Naive thymus-derived CD4-positive, alpha-beta T cell (primary cell): ENCODE measurements at regions of chr6 and their contacts with region 1.

Region 1: GRCh38 chr6:52577022-52577777 is at the start of gene TRAM2:
- DNase-seq: peak; percentile 67 to 86 (median 79)
- ATAC-seq: peak; percentile 90
- H3K4me3 ChIP-seq: peak within 1 kb of the TSS; percentile 76
- H3K4me3 Mint-ChIP-seq: peak within 1 kb of the TSS; percentile 83 to 95 (median 88)
- H3K27ac ChIP-seq: peak within 1 kb of the TSS; percentile 80
- H3K27ac Mint-ChIP-seq: peak within 1 kb of the TSS; percentile 72 to 93 (median 89)
- H3K4me1 ChIP-seq: peaks cover 27 to 34% of the 10 kb centered on the region in 2 donors
- H3K4me1 Mint-ChIP-seq: peaks cover 35 to 60% (median 49%) of the 10 kb centered on the region in 7 donors
- H3K27me3 ChIP-seq: no peaks in the 10 kb centered on the region
- H3K27me3 Mint-ChIP-seq: peaks cover 0 to 20% (median 0%) of the 10 kb centered on the region in 5 donors
- total RNA-seq, gene TRAM2: 8.9 to 10.9 (median 10.3) TPM

Region 2: GRCh38 chr6:50742161-50742560 is 1835.0 kb before region 1 on chr6:
- CTCF ChIA-PET with region 1: no interaction called
- POLR2A ChIA-PET with region 1: no interaction called
- intact Hi-C with region 1: no loop called
- DNase-seq: no peak
- ATAC-seq: no peak
- H3K4me3 ChIP-seq: no peak overlapping the region
- H3K4me3 Mint-ChIP-seq: no peak overlapping the region
- H3K27ac ChIP-seq: no peak overlapping the region
- H3K27ac Mint-ChIP-seq: no peak overlapping the region
- H3K4me1 ChIP-seq: no peaks in the 10 kb centered on the region
- H3K4me1 Mint-ChIP-seq: no peaks in the 10 kb centered on the region
- H3K27me3 ChIP-seq: no peaks in the 10 kb centered on the region
- H3K27me3 Mint-ChIP-seq: no peaks in the 10 kb centered on the region

Region 3: DNA sequence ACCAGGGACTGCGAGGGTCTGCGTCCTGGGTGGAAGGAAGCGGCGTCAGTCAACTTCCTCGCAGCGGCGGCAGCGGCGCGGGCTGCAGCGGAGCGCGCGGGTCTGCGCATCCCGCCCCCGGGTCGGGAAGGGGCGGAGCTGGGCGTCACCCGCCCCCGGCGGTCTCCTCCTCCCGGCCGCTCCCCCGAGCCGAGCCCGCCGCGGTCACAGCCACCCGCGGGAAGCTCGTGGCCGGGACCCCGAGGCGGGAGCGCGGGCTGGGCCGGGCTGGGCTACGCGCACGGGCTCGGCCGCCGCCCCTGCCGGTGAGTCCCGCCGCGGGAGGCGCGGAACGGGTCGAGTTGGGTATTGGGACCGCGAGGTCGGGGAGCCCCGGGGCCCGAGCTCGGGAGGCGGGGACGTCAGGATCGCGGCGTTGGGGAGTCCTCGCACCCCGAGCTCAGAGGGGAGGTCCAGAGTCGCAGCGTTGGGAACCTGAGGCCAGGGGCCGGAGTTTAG is 215.2 kb before region 1 on chr6 and contains the start of gene PAQR8:
- CTCF ChIA-PET with region 1: interaction called, 7 read pairs
- POLR2A ChIA-PET with region 1: no interaction called
- intact Hi-C with region 1: loop called (anchors 1 kb)
- DNase-seq: peak; percentile 77 to 89 (median 86)
- ATAC-seq: peak; percentile 95
- H3K4me3 ChIP-seq: peak within 1 kb of the TSS; percentile 90
- H3K4me3 Mint-ChIP-seq: peak within 1 kb of the TSS; percentile 83 to 100 (median 98)
- H3K27ac ChIP-seq: peak within 1 kb of the TSS; percentile 86
- H3K27ac Mint-ChIP-seq: peak within 1 kb of the TSS; percentile 90 to 99 (median 94)
- H3K4me1 ChIP-seq: peaks cover 25 to 28% of the 10 kb centered on the region in 2 donors
- H3K4me1 Mint-ChIP-seq: peaks cover 25 to 55% (median 45%) of the 10 kb centered on the region in 7 donors
- H3K27me3 ChIP-seq: no peaks in the 10 kb centered on the region
- H3K27me3 Mint-ChIP-seq: peaks cover 0 to 9% (median 0%) of the 10 kb centered on the region in 5 donors
- total RNA-seq, gene PAQR8: 7.5 to 46.2 (median 21.6) TPM

Region 4: DNA sequence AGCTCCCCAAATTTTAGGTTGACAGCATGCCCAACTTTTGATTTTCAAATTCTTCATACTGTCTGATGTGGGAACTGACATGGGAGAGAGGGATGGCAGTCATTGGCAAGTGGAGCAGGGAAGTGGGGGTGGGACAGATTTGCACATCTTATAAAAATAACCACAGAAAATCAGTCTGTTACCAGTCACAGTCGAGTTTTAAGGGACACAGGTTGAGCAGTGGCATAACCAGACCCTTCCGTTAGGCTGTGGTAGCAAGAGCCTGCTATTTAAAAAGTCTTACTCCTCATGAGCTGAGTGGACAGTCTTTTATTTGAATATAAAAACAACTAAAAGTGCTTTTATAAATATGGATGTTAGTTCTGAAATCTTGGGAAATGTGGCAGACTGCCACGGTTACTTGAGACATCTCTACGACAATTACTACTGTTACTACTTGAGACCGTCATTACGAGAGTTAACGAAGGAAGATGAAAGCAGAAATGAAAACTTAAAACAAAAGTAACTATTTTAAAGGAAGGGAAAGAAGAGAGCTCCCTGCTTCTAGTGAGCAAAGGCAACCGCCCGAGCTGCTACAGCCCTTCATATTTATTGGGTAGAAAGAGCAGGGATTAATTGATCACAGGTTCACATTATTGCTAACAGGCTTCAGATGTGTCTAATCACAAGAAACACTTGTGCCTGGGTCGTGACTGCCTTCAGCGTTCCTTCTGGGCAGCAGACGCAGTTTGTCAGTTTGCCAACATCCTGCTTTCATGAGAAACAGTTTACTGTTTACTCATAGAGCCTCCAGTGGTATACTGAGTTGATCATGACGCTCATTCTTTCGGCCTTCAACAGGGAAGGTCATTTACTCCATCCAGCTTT is 85.8 kb before region 1 on chr6:
- CTCF ChIA-PET with region 1: no interaction called
- POLR2A ChIA-PET with region 1: no interaction called
- intact Hi-C with region 1: loop called in 1 of 2 experiments (anchors 5 kb)
- DNase-seq: no peak
- ATAC-seq: no peak
- H3K4me3 ChIP-seq: no peak overlapping the region
- H3K4me3 Mint-ChIP-seq: no peak overlapping the region
- H3K27ac ChIP-seq: no peak overlapping the region
- H3K27ac Mint-ChIP-seq: no peak overlapping the region
- H3K4me1 ChIP-seq: no peaks in the 10 kb centered on the region
- H3K4me1 Mint-ChIP-seq: peaks cover 0 to 37% (median 0%) of the 10 kb centered on the region in 7 donors
- H3K27me3 ChIP-seq: no peaks in the 10 kb centered on the region
- H3K27me3 Mint-ChIP-seq: peaks cover 0 to 10% (median 0%) of the 10 kb centered on the region in 5 donors

Region 5: DNA sequence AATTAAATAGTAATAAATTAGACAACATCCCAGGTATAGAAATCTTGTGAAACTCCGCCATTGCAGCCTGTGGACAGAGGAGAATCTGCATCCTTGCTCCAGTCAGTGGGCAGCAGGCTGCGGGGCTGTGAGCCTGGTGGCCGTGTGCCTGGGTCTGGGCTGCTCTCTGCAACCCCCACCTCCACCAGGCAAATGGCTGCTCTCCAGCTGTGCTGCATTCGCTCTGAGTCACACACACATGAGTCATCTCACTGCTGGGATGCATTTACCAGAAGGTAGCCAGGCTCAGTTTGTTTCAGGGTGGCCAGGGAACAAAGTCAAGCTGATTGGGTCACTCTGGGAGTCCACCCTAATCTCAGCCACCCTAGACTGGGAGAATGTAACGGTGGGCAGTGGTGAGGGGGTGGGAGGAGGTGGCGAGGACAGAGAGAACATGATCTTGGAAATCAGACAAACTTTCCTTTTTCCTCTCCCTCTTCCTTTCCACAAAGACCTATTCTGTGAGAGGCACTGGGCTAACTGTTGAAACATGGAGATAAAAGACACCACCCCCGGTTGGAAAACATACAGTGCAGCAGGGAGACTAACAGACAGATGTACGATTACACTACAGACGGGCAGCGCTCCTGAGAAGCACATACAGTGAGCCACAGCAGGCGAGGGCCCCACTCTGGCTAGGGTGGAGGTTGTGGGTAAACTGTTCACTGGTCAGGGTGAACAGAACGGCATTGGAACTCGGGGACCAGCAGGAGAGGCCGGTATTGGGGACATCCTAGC is 59.5 kb before region 1 on chr6:
- CTCF ChIA-PET with region 1: no interaction called
- POLR2A ChIA-PET with region 1: no interaction called
- intact Hi-C with region 1: no loop called
- DNase-seq: peak in 1 of 9 donors; percentile 38
- ATAC-seq: peak; percentile 26
- H3K4me3 ChIP-seq: no peak overlapping the region
- H3K4me3 Mint-ChIP-seq: no peak overlapping the region
- H3K27ac ChIP-seq: no peak overlapping the region
- H3K27ac Mint-ChIP-seq: peak overlapping the region in 1 of 9 donors; percentile 1
- H3K4me1 ChIP-seq: no peaks in the 10 kb centered on the region
- H3K4me1 Mint-ChIP-seq: peaks cover 0 to 19% (median 0%) of the 10 kb centered on the region in 7 donors
- H3K27me3 ChIP-seq: no peaks in the 10 kb centered on the region
- H3K27me3 Mint-ChIP-seq: no peaks in the 10 kb centered on the region

Region 6: GRCh38 chr6:52647199-52647598 is 70.0 kb after region 1 on chr6:
- CTCF ChIA-PET with region 1: no interaction called
- POLR2A ChIA-PET with region 1: no interaction called
- intact Hi-C with region 1: loop called in 1 of 2 experiments (anchors 1 kb)
- DNase-seq: no peak
- ATAC-seq: no peak
- H3K4me3 ChIP-seq: no peak overlapping the region
- H3K4me3 Mint-ChIP-seq: no peak overlapping the region
- H3K27ac ChIP-seq: no peak overlapping the region
- H3K27ac Mint-ChIP-seq: no peak overlapping the region
- H3K4me1 ChIP-seq: no peaks in the 10 kb centered on the region
- H3K4me1 Mint-ChIP-seq: peaks cover 4 to 12% (median 8%) of the 10 kb centered on the region in 7 donors
- H3K27me3 ChIP-seq: no peaks in the 10 kb centered on the region
- H3K27me3 Mint-ChIP-seq: peaks cover 3 to 51% (median 8%) of the 10 kb centered on the region in 5 donors

Region 7: GRCh38 chr6:53064726-53065215 is 487.6 kb after region 1 on chr6:
- CTCF ChIA-PET with region 1: no interaction called
- POLR2A ChIA-PET with region 1: no interaction called
- intact Hi-C with region 1: loop called (anchors 1 kb)
- DNase-seq: peak; percentile 81 to 98 (median 94)
- ATAC-seq: peak; percentile 91
- H3K4me3 ChIP-seq: peak overlapping the region; percentile 95
- H3K4me3 Mint-ChIP-seq: peak overlapping the region; percentile 86 to 100 (median 99)
- H3K27ac ChIP-seq: peak overlapping the region; percentile 78
- H3K27ac Mint-ChIP-seq: peak overlapping the region; percentile 90 to 99 (median 97)
- H3K4me1 ChIP-seq: peaks cover 22% of the 10 kb centered on the region in 2 donors
- H3K4me1 Mint-ChIP-seq: peaks cover 36 to 68% (median 56%) of the 10 kb centered on the region in 7 donors
- H3K27me3 ChIP-seq: no peaks in the 10 kb centered on the region
- H3K27me3 Mint-ChIP-seq: no peaks in the 10 kb centered on the region